CD4-positive, alpha-beta memory T cell (primary cell): ENCODE measurements at regions of chr22 and their contacts with region 1.

Region 1: DNA sequence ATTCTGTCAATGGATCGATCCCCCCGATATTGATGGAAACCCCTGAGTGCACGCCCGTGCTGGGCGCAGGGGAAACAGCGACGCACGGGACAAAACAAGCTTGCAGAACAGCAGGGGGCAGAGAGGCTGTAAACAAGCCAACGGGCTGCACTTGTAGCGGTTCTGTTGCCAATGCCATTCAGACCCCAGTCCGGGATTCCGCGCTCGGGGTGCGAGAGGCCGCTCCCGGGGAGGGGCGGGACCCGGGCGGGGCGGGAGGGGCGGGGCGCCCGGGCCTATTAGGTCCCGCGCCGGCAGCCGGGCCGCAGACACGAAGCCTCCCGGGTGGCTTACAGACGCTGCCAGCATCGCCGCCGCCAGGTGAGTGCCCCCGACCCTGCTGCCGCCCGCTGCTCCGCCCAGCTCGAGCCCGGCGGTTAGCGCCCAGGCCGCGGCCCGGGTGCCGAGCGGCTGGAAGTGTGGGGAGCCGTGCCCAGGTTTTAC is at the start of gene BIK:
- DNase-seq: peak; percentile 32 to 58 (median 34)
- H3K4me3 ChIP-seq: peak within 1 kb of the TSS; percentile 28 to 74
- H3K4me3 Mint-ChIP-seq: peak within 1 kb of the TSS; percentile 80 to 91 (median 88)
- H3K27ac ChIP-seq: peak within 1 kb of the TSS; percentile 35
- H3K27ac Mint-ChIP-seq: peak within 1 kb of the TSS in 5 of 7 donors; percentile 42 to 87 (median 81)
- H3K4me1 ChIP-seq: peaks cover 12% of the 10 kb centered on the region
- H3K4me1 Mint-ChIP-seq: peaks cover 4 to 11% (median 7%) of the 10 kb centered on the region in 4 donors
- H3K27me3 ChIP-seq: no peaks in the 10 kb centered on the region
- H3K27me3 Mint-ChIP-seq: no peaks in the 10 kb centered on the region
- total RNA-seq, gene BIK: 2.5 to 2.7 TPM

Region 2: DNA sequence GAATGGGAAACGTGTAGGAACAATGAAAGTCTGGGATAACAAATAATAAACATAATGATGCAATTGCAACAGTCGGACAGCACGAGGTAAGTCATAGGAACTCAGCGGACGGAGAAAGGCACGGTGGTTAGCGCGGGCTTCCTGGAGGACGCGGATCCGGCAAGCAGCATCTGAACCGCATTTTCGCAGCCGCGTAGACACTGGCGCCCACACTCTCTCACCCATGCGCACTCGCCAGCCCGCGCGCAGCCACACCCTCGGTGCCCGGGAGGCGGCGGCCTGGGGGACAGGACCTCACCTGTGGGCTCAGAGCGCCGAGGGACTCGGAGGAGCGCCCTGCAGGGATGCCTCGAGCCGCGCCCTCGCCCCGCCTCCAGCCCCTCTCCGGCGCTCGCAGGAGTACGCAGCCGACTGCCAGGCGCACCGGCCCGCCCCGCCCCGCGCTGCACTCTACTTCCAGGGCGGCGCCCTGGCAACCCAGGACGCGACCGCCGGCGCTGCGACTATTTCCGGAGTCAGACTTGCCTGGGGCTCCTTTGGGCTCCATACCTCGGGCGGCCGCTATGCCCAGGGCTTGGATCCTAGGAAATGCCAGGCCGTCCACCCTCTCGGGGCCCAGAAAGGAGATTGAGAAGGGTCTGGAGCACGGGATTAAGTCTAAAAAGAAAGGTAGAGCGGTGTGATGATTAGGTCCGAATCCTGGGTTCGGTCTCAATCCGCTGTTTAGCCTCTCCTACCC is 21.3 kb before region 1 on chr22 and contains the start of gene TTLL1:
- CTCF ChIA-PET with region 1: interaction called, 3 read pairs
- POLR2A ChIA-PET with region 1: interaction called, 7 read pairs
- intact Hi-C with region 1: loop called (anchors 2 kb)
- DNase-seq: peak; percentile 86 to 89 (median 88)
- H3K4me3 ChIP-seq: peak within 1 kb of the TSS; percentile 41 to 91
- H3K4me3 Mint-ChIP-seq: peak within 1 kb of the TSS; percentile 85 to 96 (median 92)
- H3K27ac ChIP-seq: peak within 1 kb of the TSS; percentile 27
- H3K27ac Mint-ChIP-seq: peak within 1 kb of the TSS; percentile 75 to 92 (median 89)
- H3K4me1 ChIP-seq: peaks cover 13% of the 10 kb centered on the region
- H3K4me1 Mint-ChIP-seq: peaks cover 8 to 26% (median 18%) of the 10 kb centered on the region in 4 donors
- H3K27me3 ChIP-seq: no peaks in the 10 kb centered on the region
- H3K27me3 Mint-ChIP-seq: no peaks in the 10 kb centered on the region
- total RNA-seq, gene TTLL1: 6.4 to 7.8 TPM

Region 3: GRCh38 chr22:43136255-43136654 is 25.8 kb after region 1 on chr22:
- CTCF ChIA-PET with region 1: interaction called, 3 read pairs
- POLR2A ChIA-PET with region 1: no interaction called
- intact Hi-C with region 1: loop called (anchors 1 kb)
- DNase-seq: peak in 4 of 5 donors; percentile 14 to 25 (median 22)
- H3K4me3 ChIP-seq: no peak overlapping the region
- H3K4me3 Mint-ChIP-seq: no peak overlapping the region
- H3K27ac ChIP-seq: no peak overlapping the region
- H3K27ac Mint-ChIP-seq: peak overlapping the region in 1 of 7 donors; percentile 47
- H3K4me1 ChIP-seq: peaks cover 4% of the 10 kb centered on the region
- H3K4me1 Mint-ChIP-seq: peaks cover 0 to 6% (median 3%) of the 10 kb centered on the region in 4 donors
- H3K27me3 ChIP-seq: no peaks in the 10 kb centered on the region
- H3K27me3 Mint-ChIP-seq: no peaks in the 10 kb centered on the region

Region 4: DNA sequence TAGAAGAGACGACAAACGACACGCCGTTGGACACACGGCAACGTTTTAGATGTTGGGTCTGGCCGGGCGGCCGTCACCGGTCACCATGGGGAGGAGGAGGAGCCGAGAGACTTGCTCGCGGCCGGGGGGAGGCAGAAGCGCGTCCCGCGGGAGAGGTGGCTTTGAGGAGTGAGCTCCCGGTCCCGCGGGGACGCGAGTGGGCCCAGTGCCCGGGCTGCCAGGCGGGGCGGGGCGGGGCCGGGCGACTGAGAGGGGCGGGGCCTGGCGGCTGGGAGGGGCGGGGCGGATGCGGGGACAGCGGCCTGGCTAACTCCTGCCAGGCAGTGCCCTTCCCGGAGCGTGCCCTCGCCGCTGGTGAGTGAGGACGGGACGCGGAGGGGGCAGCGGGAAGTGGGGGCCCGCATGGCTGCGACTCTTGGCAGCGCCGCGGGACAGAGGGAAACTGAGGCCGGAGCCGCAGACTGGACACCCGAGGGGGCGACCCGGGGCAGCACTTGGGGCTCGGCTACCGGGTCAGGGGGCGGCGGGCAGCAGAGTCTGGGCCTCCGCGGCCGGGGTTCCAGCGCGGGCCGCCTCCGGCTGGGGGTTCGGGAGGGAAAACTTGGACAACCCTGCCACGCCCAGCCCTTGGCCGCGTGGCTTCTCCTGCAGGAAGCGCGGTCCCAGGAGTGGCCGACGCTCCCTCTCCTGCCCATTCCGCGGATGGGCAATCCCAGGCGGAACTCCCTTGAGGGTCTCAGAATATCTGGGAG is 40.9 kb after region 1 on chr22 and contains the start of gene TSPO:
- CTCF ChIA-PET with region 1: no interaction called
- POLR2A ChIA-PET with region 1: no interaction called
- intact Hi-C with region 1: loop called (anchors 5 kb)
- DNase-seq: peak; percentile 41 to 53 (median 45)
- H3K4me3 ChIP-seq: peak within 1 kb of the TSS; percentile 61 to 88
- H3K4me3 Mint-ChIP-seq: peak within 1 kb of the TSS; percentile 87 to 97 (median 90)
- H3K27ac ChIP-seq: peak within 1 kb of the TSS; percentile 68
- H3K27ac Mint-ChIP-seq: peak within 1 kb of the TSS; percentile 83 to 95 (median 92)
- H3K4me1 ChIP-seq: peaks cover 18% of the 10 kb centered on the region
- H3K4me1 Mint-ChIP-seq: peaks cover 7 to 25% (median 15%) of the 10 kb centered on the region in 4 donors
- H3K27me3 ChIP-seq: no peaks in the 10 kb centered on the region
- H3K27me3 Mint-ChIP-seq: no peaks in the 10 kb centered on the region
- total RNA-seq, gene TSPO: 66.9 to 71.0 TPM